Heart left ventricle (tissue), 16 donors: ENCODE measurements at regions of chr6 and their contacts with region 1.

Region 1: GRCh38 chr6:144284783-144285547 is at the start of gene UTRN:
- DNase-seq: peak; percentile 87 to 92 (median 88)
- ATAC-seq: peak; percentile 71 to 86 (median 81)
- H3K4me3 ChIP-seq: peak within 1 kb of the TSS; percentile 67 to 92 (median 86)
- H3K27ac ChIP-seq: peak within 1 kb of the TSS; percentile 95 to 99 (median 98)
- H3K4me1 ChIP-seq: peaks cover 0 to 31% (median 11%) of the 10 kb centered on the region in 12 donors
- H3K27me3 ChIP-seq: no peaks in the 10 kb centered on the region
- CTCF ChIP-seq: peak in 1 of 12 donors; percentile 4
- POLR2A ChIP-seq: peak in 1 of 2 donors; percentile 60
- total RNA-seq, gene UTRN: 69.3 to 129 (median 86.0) TPM

Region 2: GRCh38 chr6:144104898-144105487 is 180.0 kb before region 1 on chr6:
- intact Hi-C with region 1: loop called in 3 of 10 experiments (anchors 5 to 10 kb)
- DNase-seq: peak in 2 of 5 donors; percentile 21 to 36
- ATAC-seq: peak; percentile 64 to 93 (median 89)
- H3K4me3 ChIP-seq: no peak overlapping the region
- H3K27ac ChIP-seq: no peak overlapping the region
- H3K4me1 ChIP-seq: peaks cover 0 to 7% (median 0%) of the 10 kb centered on the region in 12 donors
- H3K27me3 ChIP-seq: no peaks in the 10 kb centered on the region
- CTCF ChIP-seq: peak; percentile 52 to 90 (median 75)
- POLR2A ChIP-seq: no peak

Region 3: DNA sequence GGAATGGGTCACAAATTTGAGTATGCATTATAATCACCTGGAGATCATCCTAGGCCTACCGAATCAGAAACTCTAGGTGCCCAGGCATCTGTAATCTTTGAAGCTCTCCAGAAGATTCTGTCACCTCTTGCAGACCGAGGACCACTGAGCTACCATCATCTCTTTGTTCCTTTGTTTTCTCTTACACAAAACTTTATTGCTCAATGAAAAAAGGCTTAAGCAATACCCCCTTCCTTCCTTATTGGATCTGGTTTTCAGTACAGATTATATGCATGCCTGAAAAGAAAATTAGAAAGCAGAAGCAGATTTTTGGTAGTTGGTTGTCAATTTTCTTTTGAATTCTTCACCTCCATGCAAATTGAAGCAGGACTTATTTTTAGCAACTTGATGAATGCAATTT is 103.3 kb before region 1 on chr6:
- intact Hi-C with region 1: no loop called
- DNase-seq: no peak
- ATAC-seq: no peak
- H3K4me3 ChIP-seq: no peak overlapping the region
- H3K27ac ChIP-seq: no peak overlapping the region
- H3K4me1 ChIP-seq: peaks cover 0 to 47% (median 0%) of the 10 kb centered on the region in 12 donors
- H3K27me3 ChIP-seq: no peaks in the 10 kb centered on the region
- CTCF ChIP-seq: no peak
- POLR2A ChIP-seq: no peak

Region 4: GRCh38 chr6:144215932-144216667 is 68.9 kb before region 1 on chr6:
- intact Hi-C with region 1: loop called in 9 of 10 experiments (anchors 1 to 5 kb)
- DNase-seq: peak; percentile 92 to 96 (median 95)
- ATAC-seq: peak; percentile 91 to 96 (median 94)
- H3K4me3 ChIP-seq: peak overlapping the region; percentile 35 to 82 (median 71)
- H3K27ac ChIP-seq: peak overlapping the region; percentile 92 to 100 (median 96)
- H3K4me1 ChIP-seq: peaks cover 0 to 25% (median 13%) of the 10 kb centered on the region in 12 donors
- H3K27me3 ChIP-seq: no peaks in the 10 kb centered on the region
- CTCF ChIP-seq: peak; percentile 49 to 78 (median 66)
- POLR2A ChIP-seq: peak in 1 of 2 donors; percentile 44

Region 5: GRCh38 chr6:144349690-144350527 is 64.9 kb after region 1 on chr6:
- intact Hi-C with region 1: loop called in 4 of 10 experiments (anchors 5 to 10 kb)
- DNase-seq: peak in 2 of 5 donors; percentile 38 to 52
- ATAC-seq: peak; percentile 64 to 89 (median 72)
- H3K4me3 ChIP-seq: peak overlapping the region in 8 of 12 donors; percentile 1 to 33 (median 10)
- H3K27ac ChIP-seq: peak overlapping the region in 11 of 12 donors; percentile 35 to 82 (median 67)
- H3K4me1 ChIP-seq: peaks cover 18 to 98% (median 71%) of the 10 kb centered on the region in 12 donors
- H3K27me3 ChIP-seq: no peaks in the 10 kb centered on the region
- CTCF ChIP-seq: no peak
- POLR2A ChIP-seq: no peak

Region 6: DNA sequence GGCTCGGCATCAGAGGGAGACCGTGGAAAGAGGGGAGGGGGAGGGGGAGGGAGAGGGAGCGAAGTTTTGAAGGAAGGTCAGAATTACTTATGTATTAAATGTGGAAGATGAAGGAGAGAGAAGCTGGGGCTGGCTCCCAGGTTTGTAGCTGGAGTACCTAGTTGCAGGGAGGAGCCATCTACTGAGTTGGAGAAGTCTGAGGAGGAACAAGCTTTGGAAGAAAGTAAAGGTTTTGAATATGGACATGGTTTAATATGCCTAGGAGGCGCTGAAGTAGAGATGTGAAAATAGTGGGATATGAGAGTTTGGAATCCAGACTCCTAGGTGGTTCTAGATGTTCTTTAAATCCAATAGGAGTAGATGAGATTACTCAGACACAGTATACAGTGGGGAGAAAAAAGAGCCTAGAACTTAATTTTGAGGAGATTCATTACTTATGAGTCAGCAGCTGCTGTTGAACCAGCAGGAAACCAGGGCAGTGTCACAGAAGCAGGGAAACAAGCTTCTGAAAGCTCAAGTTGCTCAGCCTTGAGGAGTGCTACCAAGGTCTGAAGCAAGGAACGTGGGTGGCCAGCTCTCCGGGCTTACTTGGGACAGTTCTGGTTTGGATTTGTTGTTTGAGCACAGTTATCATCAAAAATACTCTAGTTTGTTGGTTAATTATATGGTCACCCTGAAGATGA is 149.5 kb after region 1 on chr6:
- intact Hi-C with region 1: loop called in 2 of 10 experiments (anchors 5 to 10 kb)
- DNase-seq: no peak
- ATAC-seq: peak in 3 of 4 donors; percentile 47 to 52 (median 47)
- H3K4me3 ChIP-seq: no peak overlapping the region
- H3K27ac ChIP-seq: peak overlapping the region in 2 of 12 donors; percentile 12 to 36
- H3K4me1 ChIP-seq: peaks cover 0 to 35% (median 16%) of the 10 kb centered on the region in 12 donors
- H3K27me3 ChIP-seq: no peaks in the 10 kb centered on the region
- CTCF ChIP-seq: no peak
- POLR2A ChIP-seq: no peak